MCF 10A (cell line): ENCODE measurements at regions of chr10 and their contacts with region 1.

Region 1: GRCh38 chr10:125936331-125936730 is 40.0 kb downstream of the FANK1 start:
- DNase-seq: no peak
- H3K4me3 Mint-ChIP-seq: no peak overlapping the region
- H3K27ac Mint-ChIP-seq: no peak overlapping the region
- H3K4me1 Mint-ChIP-seq: peaks cover 4% of the 10 kb centered on the region
- H3K27me3 Mint-ChIP-seq: no peaks in the 10 kb centered on the region
- CTCF ChIP-seq: no peak

Region 2: DNA sequence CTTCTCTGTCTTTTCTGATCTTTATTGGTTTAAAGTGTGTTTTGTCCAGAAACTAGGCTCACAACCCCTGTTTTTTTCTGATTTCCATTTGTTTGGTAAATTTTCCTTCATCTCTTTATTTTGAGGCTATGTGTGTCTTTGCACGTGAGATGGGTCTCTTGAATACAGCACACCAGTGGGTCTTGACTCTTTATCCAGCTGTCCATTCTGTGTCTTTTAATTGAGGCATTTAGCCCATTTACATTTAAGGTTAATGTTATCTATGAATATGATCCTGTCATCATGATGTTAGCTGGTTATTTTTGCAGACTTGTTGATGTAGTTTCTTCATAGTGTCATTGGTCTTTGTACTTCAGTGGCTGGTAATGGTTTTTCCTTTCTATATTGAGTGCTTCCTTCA is 263.4 kb before region 1 on chr10:
- CTCF ChIA-PET with region 1: no interaction called
- POLR2A ChIA-PET with region 1: no interaction called
- intact Hi-C with region 1: no loop called
- DNase-seq: no peak
- H3K4me3 Mint-ChIP-seq: no peak overlapping the region
- H3K27ac Mint-ChIP-seq: no peak overlapping the region
- H3K4me1 Mint-ChIP-seq: no peaks in the 10 kb centered on the region
- H3K27me3 Mint-ChIP-seq: peaks cover 57% of the 10 kb centered on the region
- CTCF ChIP-seq: no peak

Region 3: DNA sequence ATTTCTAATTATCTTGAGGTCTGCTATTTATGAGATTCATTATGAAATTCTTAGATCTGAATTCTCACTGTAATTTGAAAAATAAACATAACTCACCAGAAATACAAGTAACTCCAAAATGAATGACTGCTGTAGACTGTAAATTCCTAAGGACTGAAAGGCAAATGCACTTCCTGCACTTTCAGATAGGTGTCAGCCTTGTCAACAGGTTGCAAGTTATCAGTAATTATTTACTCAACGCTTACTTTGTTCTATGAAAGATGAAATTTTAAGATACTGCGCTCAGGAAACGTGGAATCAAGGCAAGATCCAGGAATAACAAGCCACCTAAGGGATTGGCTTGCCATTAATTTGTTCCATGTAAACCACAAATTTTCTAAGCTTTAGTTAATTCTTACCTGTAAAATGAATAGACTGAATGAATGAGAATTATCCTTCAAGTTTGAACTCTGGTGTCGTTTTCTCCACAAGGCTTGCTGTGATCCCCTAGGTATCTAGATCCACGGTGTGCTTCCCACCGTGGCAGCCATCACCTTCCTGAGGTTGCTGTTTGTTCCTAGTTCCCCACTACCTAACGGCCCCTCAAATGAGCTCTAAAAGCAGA is 67.9 kb before region 1 on chr10:
- CTCF ChIA-PET with region 1: interaction called, 37 read pairs
- POLR2A ChIA-PET with region 1: no interaction called
- intact Hi-C with region 1: loop called (anchors 1 kb)
- DNase-seq: peak; percentile 57
- H3K4me3 Mint-ChIP-seq: no peak overlapping the region
- H3K27ac Mint-ChIP-seq: no peak overlapping the region
- H3K4me1 Mint-ChIP-seq: peaks cover 9% of the 10 kb centered on the region
- H3K27me3 Mint-ChIP-seq: no peaks in the 10 kb centered on the region
- CTCF ChIP-seq: peak; percentile 89

Region 4: GRCh38 chr10:125976960-125977603 is 40.8 kb after region 1 on chr10:
- CTCF ChIA-PET with region 1: interaction called, 29 read pairs
- POLR2A ChIA-PET with region 1: no interaction called
- intact Hi-C with region 1: loop called (anchors 2 kb)
- DNase-seq: peak; percentile 24
- H3K4me3 Mint-ChIP-seq: no peak overlapping the region
- H3K27ac Mint-ChIP-seq: no peak overlapping the region
- H3K4me1 Mint-ChIP-seq: peaks cover 10% of the 10 kb centered on the region
- H3K27me3 Mint-ChIP-seq: no peaks in the 10 kb centered on the region
- CTCF ChIP-seq: no peak

Region 5: GRCh38 chr10:126160971-126161659 is 224.8 kb after region 1 on chr10:
- CTCF ChIA-PET with region 1: no interaction called
- POLR2A ChIA-PET with region 1: no interaction called
- intact Hi-C with region 1: loop called (anchors 2 kb)
- DNase-seq: peak; percentile 54
- H3K4me3 Mint-ChIP-seq: no peak overlapping the region
- H3K27ac Mint-ChIP-seq: no peak overlapping the region
- H3K4me1 Mint-ChIP-seq: no peaks in the 10 kb centered on the region
- H3K27me3 Mint-ChIP-seq: peaks cover 28% of the 10 kb centered on the region
- CTCF ChIP-seq: peak; percentile 48

Region 6: DNA sequence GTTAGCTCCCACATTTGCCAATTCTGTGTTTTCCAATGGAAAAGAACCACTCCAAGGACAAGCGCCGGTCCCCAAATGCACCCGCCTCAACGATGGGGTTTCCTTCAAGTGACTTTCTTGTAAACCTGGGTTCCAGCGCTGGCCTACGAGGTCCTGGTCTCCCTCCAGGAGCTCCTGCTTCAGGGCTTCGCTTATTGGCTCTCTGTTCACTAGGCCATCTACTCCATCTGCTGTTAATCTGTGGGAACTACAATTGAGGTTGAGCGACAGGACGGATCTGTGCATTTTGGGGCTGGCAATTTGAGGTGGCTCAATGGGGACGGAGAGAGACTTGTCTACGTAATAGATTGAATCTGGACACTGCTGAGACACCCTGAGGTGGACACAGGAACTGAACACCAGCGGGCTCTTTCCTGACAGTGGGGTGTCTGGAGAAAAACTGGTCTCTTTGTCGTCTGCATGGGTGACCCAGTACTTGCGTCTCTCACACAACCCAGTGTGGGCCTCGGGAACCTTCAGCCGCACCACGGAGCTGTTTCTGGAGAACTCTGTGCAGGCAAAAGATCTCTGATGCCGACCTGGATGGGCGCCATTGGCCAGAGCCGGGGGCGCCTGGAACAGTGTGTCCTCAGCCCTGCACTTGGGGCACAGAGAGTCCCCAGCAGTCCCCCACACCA is 567.9 kb after region 1 on chr10:
- CTCF ChIA-PET with region 1: interaction called, 7 read pairs
- POLR2A ChIA-PET with region 1: no interaction called
- intact Hi-C with region 1: loop called (anchors 1 kb)
- DNase-seq: peak; percentile 82
- H3K4me3 Mint-ChIP-seq: no peak overlapping the region
- H3K27ac Mint-ChIP-seq: no peak overlapping the region
- H3K4me1 Mint-ChIP-seq: no peaks in the 10 kb centered on the region
- H3K27me3 Mint-ChIP-seq: no peaks in the 10 kb centered on the region
- CTCF ChIP-seq: peak; percentile 75